AG04449 (cell line): ENCODE measurements at regions of chr15 and their contacts with region 1.

Region 1: DNA sequence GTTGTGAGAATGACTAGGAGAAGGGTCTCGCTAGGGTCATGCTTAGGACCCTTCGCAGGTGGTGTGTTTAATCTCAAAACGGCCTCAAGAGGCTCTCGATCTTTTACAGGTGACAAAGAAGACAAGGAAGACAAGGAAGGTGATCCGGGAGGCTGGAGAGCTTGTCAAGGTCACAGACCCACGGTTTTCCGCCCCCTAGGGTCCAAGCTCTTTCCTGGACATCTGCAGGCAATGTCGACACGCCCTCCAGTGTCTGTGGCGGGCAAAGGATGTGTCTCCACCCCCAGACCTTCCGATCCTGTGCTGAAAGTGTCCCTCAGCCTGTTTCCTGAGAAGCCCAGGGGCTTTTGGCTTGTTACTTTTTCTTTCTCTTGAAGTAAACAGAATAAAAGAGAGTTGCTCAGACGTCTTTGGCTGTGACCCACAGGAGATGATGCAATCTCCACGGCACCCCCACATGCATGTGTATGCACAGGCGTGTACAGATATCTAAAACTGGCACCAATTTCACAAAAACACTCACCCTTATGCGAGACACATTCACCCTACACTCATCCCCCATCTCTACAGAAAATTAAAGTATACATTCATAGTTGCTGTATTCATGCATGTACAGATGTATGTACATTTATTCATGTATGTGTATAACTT is 108.8 kb downstream of the KLF13 start:
- DNase-seq: no peak
- H3K4me3 ChIP-seq: no peak overlapping the region
- CTCF ChIP-seq: peak; percentile 80

Region 2: DNA sequence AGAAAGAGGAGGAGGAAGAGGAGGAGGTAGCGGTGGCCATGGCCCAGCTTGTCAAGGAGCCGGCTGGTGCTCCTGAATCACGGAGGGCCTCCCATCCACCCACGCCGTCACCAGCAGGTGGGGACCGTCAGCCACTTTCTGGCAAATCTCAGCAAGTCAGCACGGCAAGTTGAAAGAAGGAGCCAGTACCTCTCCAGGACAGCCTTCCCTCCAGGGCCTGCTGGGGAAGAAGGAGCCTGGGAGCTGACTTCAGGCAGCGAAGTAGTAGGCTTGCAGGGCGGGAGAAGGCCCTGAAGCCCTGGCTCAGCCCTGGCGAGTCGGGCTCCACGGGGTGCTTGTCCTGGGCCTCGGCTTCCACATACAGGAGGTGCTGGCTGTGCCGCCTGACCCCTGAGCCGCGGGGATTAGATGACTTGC is 234.6 kb before region 1 on chr15:
- CTCF ChIA-PET with region 1: interaction called, 11 read pairs
- POLR2A ChIA-PET with region 1: no interaction called
- DNase-seq: no peak
- H3K4me3 ChIP-seq: no peak overlapping the region
- CTCF ChIP-seq: peak; percentile 57

Region 3: GRCh38 chr15:31215490-31216214 is 219.7 kb before region 1 on chr15:
- CTCF ChIA-PET with region 1: interaction called, 10 read pairs
- POLR2A ChIA-PET with region 1: no interaction called
- DNase-seq: no peak
- H3K4me3 ChIP-seq: peak overlapping the region; percentile 41
- CTCF ChIP-seq: peak; percentile 89

Region 4: DNA sequence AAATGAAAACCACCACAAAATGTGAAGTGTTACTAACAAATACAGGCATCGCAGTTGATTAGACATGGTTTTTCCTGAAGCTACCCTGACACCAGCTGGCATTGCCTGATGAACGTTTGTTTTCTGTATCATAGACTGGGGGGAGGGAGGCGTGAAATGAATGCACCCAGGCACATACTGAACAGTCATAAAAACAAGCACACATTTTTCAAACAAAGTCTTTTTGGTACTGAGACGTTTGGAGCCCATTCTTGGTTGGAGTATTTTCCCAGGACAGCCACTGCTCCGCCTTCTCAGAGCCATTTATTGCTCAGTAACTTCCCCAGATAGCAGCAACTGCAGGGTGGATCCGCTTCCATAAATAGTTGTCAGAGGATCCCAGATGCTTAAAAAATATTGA is 56.3 kb before region 1 on chr15:
- CTCF ChIA-PET with region 1: no interaction called
- POLR2A ChIA-PET with region 1: no interaction called
- DNase-seq: no peak
- H3K4me3 ChIP-seq: no peak overlapping the region
- CTCF ChIP-seq: no peak

Region 5: GRCh38 chr15:31458591-31459399 is 23.4 kb after region 1 on chr15:
- CTCF ChIA-PET with region 1: interaction called, 13 read pairs
- POLR2A ChIA-PET with region 1: interaction called, 3 read pairs
- DNase-seq: no peak
- H3K4me3 ChIP-seq: no peak overlapping the region
- CTCF ChIP-seq: no peak

Region 6: GRCh38 chr15:31472636-31473384 is 37.4 kb after region 1 on chr15:
- CTCF ChIA-PET with region 1: interaction called, 11 read pairs
- POLR2A ChIA-PET with region 1: interaction called, 3 read pairs
- DNase-seq: no peak
- H3K4me3 ChIP-seq: no peak overlapping the region
- CTCF ChIP-seq: no peak